Posterior cingulate gyrus (tissue), 11 donors: ENCODE measurements at regions of chr10 and their contacts with region 1.

Region 1: DNA sequence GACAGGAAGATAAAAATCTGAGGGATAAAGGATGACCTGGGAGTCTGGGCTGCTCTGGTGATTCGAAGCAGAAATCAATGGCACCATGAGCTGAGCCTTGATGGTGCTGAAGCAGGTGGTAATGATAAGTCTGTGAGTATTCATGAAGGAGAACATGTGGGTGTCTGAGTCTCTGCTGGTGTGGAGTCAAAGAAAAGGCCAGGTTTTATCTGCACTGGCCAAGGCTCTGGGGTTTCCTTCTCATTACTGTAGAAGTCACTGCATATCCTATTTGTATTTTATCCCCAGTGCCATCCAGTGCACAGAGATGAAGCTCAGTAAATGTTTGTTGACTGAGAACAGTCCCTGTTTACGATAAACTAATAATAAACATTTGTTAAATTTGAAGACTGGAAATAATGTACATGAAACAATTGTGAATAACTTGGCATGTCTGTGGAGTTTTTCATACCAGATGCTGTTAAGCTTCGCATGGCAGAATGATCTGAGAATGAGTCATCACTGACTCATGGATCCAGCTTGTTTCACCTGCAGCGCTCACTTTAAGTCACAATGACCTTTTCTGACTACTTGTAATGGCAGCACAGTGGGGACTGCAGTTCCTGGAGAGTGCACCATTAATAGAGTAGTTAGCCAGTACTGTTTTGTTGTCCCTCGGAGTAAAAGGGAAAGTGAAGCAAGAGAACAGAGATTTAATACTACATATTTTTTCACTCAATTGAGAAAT is 538.5 kb downstream of the HTR7 start:
- DNase-seq: no peak

Region 2: DNA sequence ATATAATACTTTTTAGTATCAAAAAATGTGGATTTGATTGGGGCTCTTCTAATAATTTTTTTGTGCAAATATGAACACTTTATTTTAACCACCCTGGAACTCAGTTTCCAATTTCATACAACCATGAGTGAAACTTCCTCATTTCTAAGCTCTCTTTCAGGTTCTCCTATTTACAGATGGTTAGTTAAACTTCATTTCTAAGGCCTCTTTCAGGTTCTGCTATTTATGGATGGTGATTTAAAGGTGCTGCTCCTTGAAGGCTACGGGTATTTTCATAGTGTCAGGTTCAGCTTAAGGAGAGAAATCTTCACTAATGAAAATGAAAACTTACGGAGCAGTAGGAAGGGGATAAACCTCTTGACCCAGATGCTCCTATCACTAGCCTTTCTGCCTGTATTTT is 49.7 kb before region 1 on chr10:
- intact Hi-C with region 1: loop called (anchors 10 kb)
- DNase-seq: no peak